Activated B cell treated with CpG ODN at 0.5 μM for 24 hours (primary cell): ENCODE measurements at regions of chr1 and their contacts with region 1.

Region 1: GRCh38 chr1:185044981-185045813 is at the start of gene RNF2:
- DNase-seq: peak; percentile 84
- ATAC-seq: peak; percentile 92
- H3K4me3 Mint-ChIP-seq: peak within 1 kb of the TSS; percentile 92
- H3K27ac Mint-ChIP-seq: peak within 1 kb of the TSS; percentile 91
- H3K4me1 Mint-ChIP-seq: peaks cover 31% of the 10 kb centered on the region
- H3K27me3 Mint-ChIP-seq: no peaks in the 10 kb centered on the region
- CTCF ChIP-seq: no peak
- total RNA-seq, gene RNF2: 23.4 and 24.5 TPM in 2 replicates

Region 2: GRCh38 chr1:183635606-183636333 is 1409.4 kb before region 1 on chr1 and contains the start of gene ARPC5:
- CTCF ChIA-PET with region 1: no interaction called
- POLR2A ChIA-PET with region 1: no interaction called
- intact Hi-C with region 1: loop called (anchors 10 kb)
- DNase-seq: peak; percentile 95
- ATAC-seq: peak; percentile 89
- H3K4me3 Mint-ChIP-seq: peak within 1 kb of the TSS; percentile 100
- H3K27ac Mint-ChIP-seq: peak within 1 kb of the TSS; percentile 100
- H3K4me1 Mint-ChIP-seq: peaks cover 46% of the 10 kb centered on the region
- H3K27me3 Mint-ChIP-seq: no peaks in the 10 kb centered on the region
- CTCF ChIP-seq: no peak
- total RNA-seq, gene ARPC5: 193 and 224 TPM in 2 replicates

Region 3: GRCh38 chr1:184973272-184974055 is 71.7 kb before region 1 on chr1:
- CTCF ChIA-PET with region 1: no interaction called
- POLR2A ChIA-PET with region 1: interaction called, 12 read pairs
- intact Hi-C with region 1: loop called (anchors 2 kb)
- DNase-seq: peak; percentile 61
- ATAC-seq: peak; percentile 51
- H3K4me3 Mint-ChIP-seq: peak overlapping the region; percentile 93
- H3K27ac Mint-ChIP-seq: peak overlapping the region; percentile 91
- H3K4me1 Mint-ChIP-seq: peaks cover 59% of the 10 kb centered on the region
- H3K27me3 Mint-ChIP-seq: peaks cover 2% of the 10 kb centered on the region
- CTCF ChIP-seq: no peak

Region 4: DNA sequence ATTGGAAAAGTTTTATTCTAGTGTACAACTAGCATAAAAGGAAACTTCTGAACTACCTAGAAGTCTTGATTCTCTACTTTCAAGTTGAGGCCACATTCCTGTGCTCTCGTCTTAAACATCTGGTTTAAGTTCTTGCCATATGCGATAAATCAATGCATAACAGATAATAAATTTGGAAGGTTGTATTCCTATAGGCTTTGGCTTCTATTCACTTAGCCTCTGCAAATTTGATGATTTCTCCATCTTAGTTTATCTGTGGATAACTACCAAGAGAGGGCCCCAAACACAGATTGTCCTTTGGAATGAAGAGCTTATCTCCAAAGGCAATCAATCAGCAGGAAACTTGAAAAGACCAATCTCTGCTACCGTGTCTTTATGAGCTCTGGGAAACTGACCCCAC is 11.5 kb before region 1 on chr1:
- CTCF ChIA-PET with region 1: no interaction called
- POLR2A ChIA-PET with region 1: no interaction called
- intact Hi-C with region 1: no loop called
- DNase-seq: no peak
- ATAC-seq: no peak
- H3K4me3 Mint-ChIP-seq: no peak overlapping the region
- H3K27ac Mint-ChIP-seq: no peak overlapping the region
- H3K4me1 Mint-ChIP-seq: no peaks in the 10 kb centered on the region
- H3K27me3 Mint-ChIP-seq: peaks cover 13% of the 10 kb centered on the region
- CTCF ChIP-seq: no peak

Region 5: DNA sequence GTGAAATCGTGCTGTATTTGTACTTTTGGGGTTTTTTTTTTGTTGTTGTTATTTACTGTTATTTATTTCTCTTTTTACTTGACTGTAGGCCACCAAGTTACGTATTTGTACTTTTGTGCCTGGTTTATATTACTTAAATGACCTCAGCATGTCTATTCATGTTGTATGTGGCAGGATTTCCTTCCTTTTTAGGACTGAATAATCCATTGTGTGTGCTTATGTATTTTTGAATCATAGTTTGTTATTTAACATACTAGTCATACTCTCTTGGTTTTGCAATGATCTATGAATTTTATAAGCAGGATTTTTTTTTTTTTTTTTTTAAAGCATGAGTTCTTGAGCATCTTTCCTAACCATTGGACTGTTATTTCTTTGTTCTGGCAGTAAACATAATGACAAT is 51.3 kb after region 1 on chr1:
- CTCF ChIA-PET with region 1: no interaction called
- POLR2A ChIA-PET with region 1: no interaction called
- intact Hi-C with region 1: no loop called
- DNase-seq: no peak
- ATAC-seq: no peak
- H3K4me3 Mint-ChIP-seq: no peak overlapping the region
- H3K27ac Mint-ChIP-seq: no peak overlapping the region
- H3K4me1 Mint-ChIP-seq: no peaks in the 10 kb centered on the region
- H3K27me3 Mint-ChIP-seq: no peaks in the 10 kb centered on the region
- CTCF ChIP-seq: no peak

Region 6: DNA sequence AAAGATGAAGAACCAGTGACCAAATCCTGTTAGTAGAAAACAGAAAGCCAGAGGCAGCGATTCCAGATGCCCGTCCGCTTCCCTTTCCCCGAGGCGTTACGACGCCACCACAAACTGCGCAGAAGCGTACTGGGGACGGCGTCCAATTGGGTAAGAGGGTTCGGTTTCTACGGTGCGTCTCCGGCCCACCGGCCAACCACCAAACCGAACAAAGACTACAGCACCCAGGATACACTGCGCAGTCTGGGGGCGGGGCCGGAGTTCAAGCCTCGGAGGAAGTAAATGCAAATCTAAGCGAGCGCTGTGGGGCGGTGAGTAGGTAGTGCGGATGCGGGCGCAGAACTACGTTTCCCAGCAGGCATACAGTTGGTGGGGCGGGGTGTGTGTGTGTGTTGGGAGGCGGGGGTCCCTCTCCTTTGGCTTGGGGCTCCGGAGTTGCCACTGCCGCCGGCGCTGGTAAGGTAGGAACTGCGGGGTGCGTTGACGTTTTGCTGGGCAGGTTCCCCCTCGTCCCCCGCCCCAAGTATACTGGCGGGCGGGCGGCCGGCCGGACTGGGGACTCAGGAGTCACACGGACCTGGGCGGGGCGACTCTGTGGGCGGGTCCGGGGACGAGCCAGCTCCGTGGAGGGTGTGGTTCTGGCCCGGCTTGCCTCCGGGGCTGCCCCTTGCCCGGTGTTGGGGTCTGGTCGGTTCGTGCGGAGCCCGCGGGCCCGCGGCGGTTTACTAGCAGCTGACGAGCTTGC is 111.8 kb after region 1 on chr1 and contains the starts of genes SWT1 and TRMT1L:
- CTCF ChIA-PET with region 1: interaction called, 3 read pairs
- POLR2A ChIA-PET with region 1: interaction called, 40 read pairs
- intact Hi-C with region 1: loop called (anchors 1 kb)
- DNase-seq: peak; percentile 97
- ATAC-seq: peak; percentile 85
- H3K4me3 Mint-ChIP-seq: peak within 1 kb of the TSS; percentile 99
- H3K27ac Mint-ChIP-seq: peak within 1 kb of the TSS; percentile 100
- H3K4me1 Mint-ChIP-seq: peaks cover 50% of the 10 kb centered on the region
- H3K27me3 Mint-ChIP-seq: no peaks in the 10 kb centered on the region
- CTCF ChIP-seq: no peak
- total RNA-seq, gene SWT1: 4.9 and 5.5 TPM in 2 replicates
- total RNA-seq, gene TRMT1L: 20.0 and 23.9 TPM in 2 replicates

Region 7: GRCh38 chr1:185608177-185608576 is 563.0 kb after region 1 on chr1:
- CTCF ChIA-PET with region 1: no interaction called
- POLR2A ChIA-PET with region 1: no interaction called
- intact Hi-C with region 1: loop called (anchors 1 kb)
- DNase-seq: no peak
- ATAC-seq: peak; percentile 83
- H3K4me3 Mint-ChIP-seq: no peak overlapping the region
- H3K27ac Mint-ChIP-seq: peak overlapping the region; percentile 26
- H3K4me1 Mint-ChIP-seq: peaks cover 63% of the 10 kb centered on the region
- H3K27me3 Mint-ChIP-seq: no peaks in the 10 kb centered on the region
- CTCF ChIP-seq: no peak

Region 8: DNA sequence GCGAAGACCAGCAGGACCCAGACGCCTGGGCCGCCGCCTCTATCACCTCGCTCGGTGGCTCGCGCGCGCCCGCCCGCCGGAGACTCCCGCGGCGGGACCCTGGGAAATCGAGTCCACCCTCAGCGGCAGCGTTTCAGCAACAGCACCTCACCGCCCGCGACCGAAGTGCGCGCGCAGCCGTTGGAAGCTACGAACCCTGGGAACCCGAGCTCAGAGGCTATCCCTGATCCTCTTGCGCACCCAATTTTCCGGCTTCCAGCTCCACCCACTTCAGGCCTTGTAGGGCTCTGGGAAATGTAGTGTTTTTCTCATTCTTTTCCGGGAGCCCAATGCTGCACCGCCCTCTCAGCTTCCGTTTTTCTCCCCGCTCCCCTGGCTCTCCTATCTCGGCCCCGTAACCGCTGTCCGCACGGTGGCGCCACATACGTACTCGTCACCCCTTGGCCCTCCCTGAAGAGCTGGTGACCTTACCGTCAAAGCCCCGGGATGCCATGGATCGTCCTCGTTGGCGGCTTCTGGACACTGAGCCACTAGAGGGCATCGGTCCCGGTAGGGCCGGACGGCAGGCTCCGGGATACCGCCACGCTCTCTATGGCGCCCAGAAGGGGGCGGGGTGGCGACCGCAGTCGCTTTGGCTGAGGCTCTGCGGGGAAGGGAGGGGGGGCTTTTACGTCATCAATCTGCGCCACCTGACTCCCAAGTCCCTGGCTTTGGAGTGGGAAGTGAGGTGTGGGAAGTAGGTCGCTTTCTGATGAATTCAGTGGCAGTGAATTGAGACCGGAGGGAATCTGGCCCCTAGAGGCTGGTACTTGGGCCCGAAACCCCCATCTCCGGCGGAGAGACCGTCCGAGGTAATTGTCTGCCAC is 1330.1 kb after region 1 on chr1 and contains the starts of genes ODR4 and TPR:
- CTCF ChIA-PET with region 1: no interaction called
- POLR2A ChIA-PET with region 1: interaction called, 4 read pairs
- intact Hi-C with region 1: loop called (anchors 1 kb)
- DNase-seq: peak; percentile 93
- ATAC-seq: peak; percentile 82
- H3K4me3 Mint-ChIP-seq: peak within 1 kb of the TSS; percentile 92
- H3K27ac Mint-ChIP-seq: peak within 1 kb of the TSS; percentile 92
- H3K4me1 Mint-ChIP-seq: peaks cover 31% of the 10 kb centered on the region
- H3K27me3 Mint-ChIP-seq: no peaks in the 10 kb centered on the region
- CTCF ChIP-seq: peak; percentile 53
- total RNA-seq, gene ODR4: 11.9 and 15.6 TPM in 2 replicates
- total RNA-seq, gene TPR: 112 and 125 TPM in 2 replicates